Ascending aorta (tissue), 2 donors: ENCODE measurements at regions of chr13 and their contacts with region 1.

Region 1: DNA sequence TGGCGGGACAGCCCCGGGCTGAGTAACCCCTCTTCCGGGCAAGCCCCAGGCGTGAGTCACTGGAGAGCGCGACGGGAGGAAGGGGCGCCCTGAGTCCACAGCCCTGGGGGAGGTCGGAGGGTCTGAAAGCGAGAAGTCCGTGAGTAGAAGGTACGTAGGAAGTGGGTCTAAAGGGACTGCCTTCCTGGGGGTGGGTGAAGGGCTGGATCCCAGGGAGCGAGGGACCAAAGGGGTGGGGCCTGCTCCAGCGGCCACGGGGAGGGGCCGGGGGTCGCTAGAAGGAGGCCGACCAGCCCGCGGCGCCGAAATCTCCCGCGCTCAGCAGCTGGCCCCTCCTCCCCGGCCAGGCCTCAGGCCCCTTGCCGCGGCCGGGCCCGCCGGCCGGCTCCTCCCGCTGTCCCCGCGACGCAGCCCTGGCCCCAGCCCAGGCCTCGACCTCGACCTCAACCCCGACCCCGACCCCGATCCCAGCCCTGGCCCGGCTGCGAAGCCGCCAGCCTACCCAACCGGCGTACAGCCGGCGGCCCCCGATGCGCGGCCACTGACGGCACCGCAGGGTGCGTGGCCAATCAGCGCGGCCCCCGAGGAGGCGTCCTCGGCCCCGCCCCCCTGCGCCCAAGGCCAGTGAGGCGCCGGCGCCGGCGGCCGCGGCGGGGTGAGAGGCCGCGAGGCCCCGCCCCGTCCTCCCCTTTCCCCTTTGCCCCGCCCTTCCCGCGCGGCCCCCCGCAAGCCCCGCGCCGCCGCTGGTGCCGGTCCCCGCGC is 22.6 kb downstream of the IPO5 start:
- DNase-seq: peak; percentile 58 to 94
- H3K4me3 ChIP-seq: peak overlapping the region; percentile 64 to 80
- H3K27ac ChIP-seq: peak overlapping the region; percentile 92 to 99
- H3K4me1 ChIP-seq: peaks cover 0 to 16% of the 10 kb centered on the region in 2 donors
- H3K27me3 ChIP-seq: no peaks in the 10 kb centered on the region
- CTCF ChIP-seq: no peak

Region 2: GRCh38 chr13:96053011-96053703 is 1922.9 kb before region 1 on chr13 and contains the start of gene UGGT2:
- intact Hi-C with region 1: loop called (anchors 5 kb)
- DNase-seq: peak; percentile 77 to 96
- H3K4me3 ChIP-seq: peak within 1 kb of the TSS; percentile 73 to 89
- H3K27ac ChIP-seq: peak within 1 kb of the TSS; percentile 81 to 94
- H3K4me1 ChIP-seq: no peaks in the 10 kb centered on the region
- H3K27me3 ChIP-seq: no peaks in the 10 kb centered on the region
- CTCF ChIP-seq: no peak
- total RNA-seq, gene UGGT2: 26.0 TPM

Region 3: GRCh38 chr13:97275265-97275664 is 700.8 kb before region 1 on chr13:
- intact Hi-C with region 1: loop called (anchors 10 kb)
- DNase-seq: no peak
- H3K4me3 ChIP-seq: no peak overlapping the region
- H3K27ac ChIP-seq: peak overlapping the region; percentile 78 to 84
- H3K4me1 ChIP-seq: peaks cover 23 to 46% of the 10 kb centered on the region in 2 donors
- H3K27me3 ChIP-seq: no peaks in the 10 kb centered on the region
- CTCF ChIP-seq: no peak

Region 4: DNA sequence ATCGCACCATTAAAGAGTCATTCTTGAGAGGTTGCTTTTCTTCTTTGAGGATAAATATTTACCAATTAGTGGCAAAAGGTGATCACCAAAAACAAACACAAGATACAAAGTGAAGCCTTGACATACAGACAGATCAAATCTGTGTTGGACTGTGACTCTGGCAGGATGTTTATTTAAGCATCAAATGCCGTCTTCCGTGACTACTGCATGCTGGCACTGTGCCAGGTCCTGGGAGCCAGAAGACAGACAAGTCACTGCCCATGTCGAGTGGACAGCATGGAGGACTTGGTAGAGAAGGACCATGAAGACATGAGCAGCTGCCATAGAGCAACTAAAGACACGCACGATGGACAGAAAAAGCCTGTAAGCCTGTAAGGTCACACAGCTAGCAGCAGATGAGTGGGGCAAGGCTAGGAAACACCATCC is 74.0 kb after region 1 on chr13:
- intact Hi-C with region 1: no loop called
- DNase-seq: no peak
- H3K4me3 ChIP-seq: no peak overlapping the region
- H3K27ac ChIP-seq: no peak overlapping the region
- H3K4me1 ChIP-seq: no peaks in the 10 kb centered on the region
- H3K27me3 ChIP-seq: no peaks in the 10 kb centered on the region
- CTCF ChIP-seq: no peak

Region 5: GRCh38 chr13:98142380-98143156 is 166.5 kb after region 1 on chr13 and contains the start of gene FARP1:
- intact Hi-C with region 1: loop called (anchors 10 kb)
- DNase-seq: peak in 1 of 2 donors; percentile 79
- H3K4me3 ChIP-seq: peak within 1 kb of the TSS; percentile 73 to 85
- H3K27ac ChIP-seq: peak within 1 kb of the TSS in 1 of 2 donors; percentile 39
- H3K4me1 ChIP-seq: peaks cover 4 to 10% of the 10 kb centered on the region in 2 donors
- H3K27me3 ChIP-seq: no peaks in the 10 kb centered on the region
- CTCF ChIP-seq: peak in 1 of 3 experiments; percentile 57
- total RNA-seq, gene FARP1: 80.8 TPM

Region 6: GRCh38 chr13:98576963-98577822 is 601.2 kb after region 1 on chr13 and contains the start of gene STK24:
- intact Hi-C with region 1: loop called (anchors 5 kb)
- DNase-seq: peak in 1 of 2 donors; percentile 77
- H3K4me3 ChIP-seq: peak within 1 kb of the TSS; percentile 88 to 89
- H3K27ac ChIP-seq: peak within 1 kb of the TSS; percentile 98 to 99
- H3K4me1 ChIP-seq: peaks cover 0 to 24% of the 10 kb centered on the region in 2 donors
- H3K27me3 ChIP-seq: no peaks in the 10 kb centered on the region
- CTCF ChIP-seq: no peak
- total RNA-seq, gene STK24: 35.4 TPM

Region 7: DNA sequence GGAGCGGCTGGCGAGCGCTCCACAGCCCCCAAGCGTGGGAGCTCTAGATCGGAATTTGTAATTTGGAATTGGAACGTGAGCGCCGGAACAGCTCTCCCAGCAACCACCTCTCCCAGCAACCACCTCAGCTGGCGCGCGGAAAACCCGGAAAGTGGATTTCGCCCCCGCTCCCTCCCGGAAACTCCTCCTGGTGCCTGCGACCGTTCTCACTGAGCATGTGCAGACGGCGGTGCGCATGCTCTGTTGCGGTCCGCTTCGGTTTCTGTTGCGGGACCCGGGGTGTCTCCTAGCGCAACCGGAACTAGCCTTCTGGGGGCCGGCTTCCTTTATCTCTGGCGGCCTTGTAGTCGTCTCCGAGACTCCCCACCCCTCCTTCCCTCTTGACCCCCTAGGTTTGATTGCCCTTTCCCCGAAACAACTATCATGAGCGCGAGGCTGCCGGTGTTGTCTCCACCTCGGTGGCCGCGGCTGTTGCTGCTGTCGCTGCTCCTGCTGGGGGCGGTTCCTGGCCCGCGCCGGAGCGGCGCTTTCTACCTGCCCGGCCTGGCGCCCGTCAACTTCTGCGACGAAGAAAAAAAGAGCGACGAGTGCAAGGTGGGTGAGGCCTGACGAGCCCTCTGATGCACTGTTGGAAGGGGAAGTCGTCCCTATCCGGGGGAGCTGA is 1525.3 kb after region 1 on chr13 and contains the start of gene TM9SF2:
- intact Hi-C with region 1: loop called (anchors 10 kb)
- DNase-seq: peak; percentile 89 to 99
- H3K4me3 ChIP-seq: peak within 1 kb of the TSS; percentile 93 to 96
- H3K27ac ChIP-seq: peak within 1 kb of the TSS; percentile 83 to 87
- H3K4me1 ChIP-seq: peaks cover 27 to 37% of the 10 kb centered on the region in 2 donors
- H3K27me3 ChIP-seq: no peaks in the 10 kb centered on the region
- CTCF ChIP-seq: no peak
- total RNA-seq, gene TM9SF2: 56.8 TPM